ENCODE measurements at regions of chr1 and their contacts with region 1.

Region 1: GRCh38 chr1:39672551-39672947 is 642 bp upstream of the NT5C1A start:
- DNase-seq: peak in 3 of 5 donors; percentile 21 to 53 (median 30)
- H3K4me3 ChIP-seq: no peak overlapping the region
- H3K4me3 Mint-ChIP-seq: peak overlapping the region in 6 of 7 donors; percentile 12 to 78 (median 62)
- H3K27ac ChIP-seq: no peak overlapping the region
- H3K27ac Mint-ChIP-seq: no peak overlapping the region
- H3K4me1 ChIP-seq: peaks cover 5% of the 10 kb centered on the region
- H3K4me1 Mint-ChIP-seq: peaks cover 0 to 11% (median 2%) of the 10 kb centered on the region in 3 donors
- H3K27me3 ChIP-seq: peaks cover 27% of the 10 kb centered on the region
- H3K27me3 Mint-ChIP-seq: peaks cover 25 to 29% of the 10 kb centered on the region in 2 donors

Region 2: GRCh38 chr1:39609618-39610331 is 62.8 kb before region 1 on chr1:
- CTCF ChIA-PET with region 1: interaction called, 12 read pairs
- POLR2A ChIA-PET with region 1: no interaction called
- DNase-seq: peak; percentile 40 to 75 (median 52)
- H3K4me3 ChIP-seq: no peak overlapping the region
- H3K4me3 Mint-ChIP-seq: peak overlapping the region in 1 of 7 donors; percentile 11
- H3K27ac ChIP-seq: no peak overlapping the region
- H3K27ac Mint-ChIP-seq: peak overlapping the region in 1 of 8 donors; percentile 22
- H3K4me1 ChIP-seq: no peaks in the 10 kb centered on the region
- H3K4me1 Mint-ChIP-seq: peaks cover 7 to 16% (median 11%) of the 10 kb centered on the region in 3 donors
- H3K27me3 ChIP-seq: no peaks in the 10 kb centered on the region
- H3K27me3 Mint-ChIP-seq: peaks cover 12 to 17% of the 10 kb centered on the region in 2 donors

Region 3: DNA sequence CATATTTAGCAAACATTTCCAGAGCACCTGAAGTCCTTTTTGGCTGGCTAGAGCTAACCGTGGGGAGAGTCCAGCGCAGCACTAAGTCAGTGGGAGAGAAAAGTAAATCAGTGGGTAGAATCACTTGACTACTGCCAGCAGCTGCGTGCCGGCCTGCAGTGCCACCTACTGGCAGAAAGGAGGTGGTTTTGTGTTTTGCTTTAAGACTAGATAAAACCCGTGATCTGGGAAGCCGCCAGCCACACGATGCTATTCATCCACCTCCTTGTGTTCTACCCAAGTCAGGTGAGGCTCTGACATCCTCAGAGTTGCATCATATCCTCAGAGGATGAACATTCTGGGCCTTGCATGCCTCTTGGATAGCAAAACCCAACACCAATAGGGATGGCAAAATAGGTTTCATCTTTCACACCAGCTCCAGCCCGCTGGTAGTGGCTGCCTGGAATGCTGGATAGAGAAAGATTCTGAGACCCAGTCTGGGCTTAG is 19.0 kb before region 1 on chr1:
- CTCF ChIA-PET with region 1: interaction called, 14 read pairs
- POLR2A ChIA-PET with region 1: no interaction called
- DNase-seq: peak; percentile 52 to 79 (median 61)
- H3K4me3 ChIP-seq: no peak overlapping the region
- H3K4me3 Mint-ChIP-seq: no peak overlapping the region
- H3K27ac ChIP-seq: no peak overlapping the region
- H3K27ac Mint-ChIP-seq: peak overlapping the region in 1 of 8 donors; percentile 25
- H3K4me1 ChIP-seq: no peaks in the 10 kb centered on the region
- H3K4me1 Mint-ChIP-seq: peaks cover 6 to 10% (median 7%) of the 10 kb centered on the region in 3 donors
- H3K27me3 ChIP-seq: peaks cover 6% of the 10 kb centered on the region
- H3K27me3 Mint-ChIP-seq: peaks cover 0 to 9% of the 10 kb centered on the region in 2 donors

Region 4: GRCh38 chr1:39683591-39684312 is 11.2 kb after region 1 on chr1:
- CTCF ChIA-PET with region 1: interaction called, 13 read pairs
- POLR2A ChIA-PET with region 1: no interaction called
- DNase-seq: peak; percentile 21 to 70 (median 45)
- H3K4me3 ChIP-seq: no peak overlapping the region
- H3K4me3 Mint-ChIP-seq: peak overlapping the region in 5 of 7 donors; percentile 23 to 77 (median 52)
- H3K27ac ChIP-seq: no peak overlapping the region
- H3K27ac Mint-ChIP-seq: no peak overlapping the region
- H3K4me1 ChIP-seq: peaks cover 24% of the 10 kb centered on the region
- H3K4me1 Mint-ChIP-seq: peaks cover 10 to 37% (median 13%) of the 10 kb centered on the region in 3 donors
- H3K27me3 ChIP-seq: no peaks in the 10 kb centered on the region
- H3K27me3 Mint-ChIP-seq: peaks cover 17 to 29% of the 10 kb centered on the region in 2 donors

Region 5: GRCh38 chr1:39691262-39692151 is 19.0 kb after region 1 on chr1 and contains the start of gene HPCAL4:
- CTCF ChIA-PET with region 1: interaction called, 20 read pairs
- POLR2A ChIA-PET with region 1: interaction called, 12 read pairs
- DNase-seq: peak; percentile 81 to 92 (median 87)
- H3K4me3 ChIP-seq: peak within 1 kb of the TSS; percentile 78
- H3K4me3 Mint-ChIP-seq: peak within 1 kb of the TSS; percentile 75 to 89 (median 80)
- H3K27ac ChIP-seq: peak within 1 kb of the TSS; percentile 78
- H3K27ac Mint-ChIP-seq: peak within 1 kb of the TSS; percentile 52 to 87 (median 72)
- H3K4me1 ChIP-seq: peaks cover 18% of the 10 kb centered on the region
- H3K4me1 Mint-ChIP-seq: peaks cover 14 to 51% (median 23%) of the 10 kb centered on the region in 3 donors
- H3K27me3 ChIP-seq: peaks cover 17% of the 10 kb centered on the region
- H3K27me3 Mint-ChIP-seq: peaks cover 5 to 33% of the 10 kb centered on the region in 2 donors
- total RNA-seq, gene HPCAL4: 1.9 to 2.0 TPM

Region 6: GRCh38 chr1:39711104-39711965 is 38.8 kb after region 1 on chr1:
- CTCF ChIA-PET with region 1: interaction called, 14 read pairs
- POLR2A ChIA-PET with region 1: no interaction called
- DNase-seq: no peak
- H3K4me3 ChIP-seq: no peak overlapping the region
- H3K4me3 Mint-ChIP-seq: no peak overlapping the region
- H3K27ac ChIP-seq: peak overlapping the region; percentile 43
- H3K27ac Mint-ChIP-seq: no peak overlapping the region
- H3K4me1 ChIP-seq: no peaks in the 10 kb centered on the region
- H3K4me1 Mint-ChIP-seq: no peaks in the 10 kb centered on the region
- H3K27me3 ChIP-seq: no peaks in the 10 kb centered on the region
- H3K27me3 Mint-ChIP-seq: peaks cover 11 to 38% of the 10 kb centered on the region in 2 donors

Region 7: DNA sequence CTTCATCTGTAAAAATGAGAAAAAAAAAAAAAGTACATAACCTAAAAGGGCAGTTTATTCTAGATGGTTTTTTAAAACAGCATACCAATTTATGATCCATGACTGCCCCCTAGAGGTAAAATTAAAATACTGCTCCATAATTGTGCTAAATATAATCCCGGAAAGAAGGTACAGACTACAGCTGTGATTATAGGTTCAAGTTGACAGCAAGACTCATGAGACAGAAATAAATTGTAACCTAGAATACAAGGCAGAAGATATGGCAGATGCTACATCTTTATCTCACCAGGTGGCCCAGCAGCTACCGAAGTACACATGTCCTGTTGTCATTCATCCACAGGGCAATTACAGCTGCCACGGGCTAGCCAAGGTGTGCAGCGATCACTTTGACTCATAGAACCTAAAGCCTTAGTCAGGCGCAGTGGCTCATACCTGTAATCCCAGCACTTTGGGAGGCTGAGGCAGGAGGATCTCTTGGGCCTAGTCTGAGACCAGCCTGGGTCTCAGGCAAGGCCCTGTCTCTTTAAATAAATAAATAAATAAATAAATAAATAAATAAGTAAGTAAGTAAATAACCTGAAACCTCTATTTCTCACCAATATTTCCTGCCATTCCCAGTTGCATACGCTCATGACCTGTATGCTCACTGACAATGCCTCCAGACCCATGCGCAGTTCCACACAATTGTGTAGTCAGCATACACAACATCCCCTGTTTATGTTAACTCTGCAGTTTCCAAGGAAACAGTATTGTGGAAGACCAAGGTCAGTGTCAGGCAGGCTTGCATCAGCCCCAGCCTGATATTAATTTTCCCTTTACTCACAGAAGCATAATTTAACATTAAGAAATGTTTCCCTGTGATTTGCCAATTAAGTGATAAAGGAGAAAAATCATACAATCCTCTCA is 47.8 kb after region 1 on chr1:
- CTCF ChIA-PET with region 1: interaction called, 15 read pairs
- POLR2A ChIA-PET with region 1: interaction called, 5 read pairs
- DNase-seq: peak in 2 of 5 donors; percentile 54 to 68
- H3K4me3 ChIP-seq: no peak overlapping the region
- H3K4me3 Mint-ChIP-seq: no peak overlapping the region
- H3K27ac ChIP-seq: no peak overlapping the region
- H3K27ac Mint-ChIP-seq: no peak overlapping the region
- H3K4me1 ChIP-seq: no peaks in the 10 kb centered on the region
- H3K4me1 Mint-ChIP-seq: no peaks in the 10 kb centered on the region
- H3K27me3 ChIP-seq: peaks cover 16% of the 10 kb centered on the region
- H3K27me3 Mint-ChIP-seq: peaks cover 15 to 39% of the 10 kb centered on the region in 2 donors

Measured in CD8-positive, alpha-beta memory T cell (primary cell).